CD8-positive, alpha-beta memory T cell (primary cell): ENCODE measurements at regions of chr16 and their contacts with region 1.

Region 1: DNA sequence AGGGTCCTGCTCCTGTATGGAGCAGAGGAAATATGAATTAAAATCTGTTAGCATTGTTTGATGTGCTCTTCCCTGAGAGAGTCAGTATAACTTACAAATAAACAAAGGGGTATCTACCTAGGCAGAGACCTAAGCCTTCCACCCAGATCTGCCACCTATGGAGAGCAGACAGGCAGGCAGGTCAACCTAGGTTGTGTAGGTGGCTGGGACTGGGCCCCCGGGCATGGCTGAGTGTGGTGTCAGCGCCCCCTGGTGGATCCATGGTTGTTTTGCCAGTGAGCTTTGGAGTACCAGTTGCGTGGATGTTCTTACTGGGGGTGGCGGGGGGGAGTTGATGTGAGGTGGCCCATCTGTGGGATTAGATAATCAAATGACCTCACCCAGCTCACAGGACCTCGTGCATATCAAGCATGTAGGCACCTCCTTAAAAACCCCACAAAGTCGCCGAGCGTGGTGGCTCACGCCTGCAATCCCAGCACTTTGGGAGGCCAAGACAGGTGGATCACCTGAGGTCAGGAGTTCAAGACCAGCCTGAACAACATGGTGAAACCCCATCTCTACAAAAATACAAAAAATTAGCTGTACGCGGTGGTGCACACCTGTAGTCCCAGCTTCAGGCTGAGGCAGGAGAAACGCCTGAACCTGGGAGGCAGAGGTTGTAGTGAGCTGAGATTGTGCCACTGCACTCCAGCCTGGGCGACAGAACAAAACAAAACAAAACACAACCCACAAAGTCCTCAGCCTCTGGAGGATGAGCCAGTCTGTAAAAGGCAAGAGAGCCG is 17.6 kb downstream of the DUS2 start:
- DNase-seq: peak; percentile 81 to 91 (median 85)
- H3K4me3 ChIP-seq: no peak overlapping the region
- H3K4me3 Mint-ChIP-seq: no peak overlapping the region
- H3K27ac ChIP-seq: no peak overlapping the region
- H3K27ac Mint-ChIP-seq: peak overlapping the region in 6 of 8 donors; percentile 51 to 92 (median 78)
- H3K4me1 ChIP-seq: peaks cover 8% of the 10 kb centered on the region
- H3K4me1 Mint-ChIP-seq: peaks cover 13 to 22% (median 16%) of the 10 kb centered on the region in 3 donors
- H3K27me3 ChIP-seq: no peaks in the 10 kb centered on the region
- H3K27me3 Mint-ChIP-seq: no peaks in the 10 kb centered on the region

Region 2: GRCh38 chr16:67816240-67817031 is 224.3 kb before region 1 on chr16:
- CTCF ChIA-PET with region 1: interaction called, 18 read pairs
- POLR2A ChIA-PET with region 1: no interaction called
- DNase-seq: peak; percentile 81 to 89 (median 85)
- H3K4me3 ChIP-seq: no peak overlapping the region
- H3K4me3 Mint-ChIP-seq: peak overlapping the region in 2 of 7 donors; percentile 21 to 59
- H3K27ac ChIP-seq: no peak overlapping the region
- H3K27ac Mint-ChIP-seq: peak overlapping the region in 6 of 8 donors; percentile 27 to 61 (median 54)
- H3K4me1 ChIP-seq: no peaks in the 10 kb centered on the region
- H3K4me1 Mint-ChIP-seq: peaks cover 2 to 7% (median 6%) of the 10 kb centered on the region in 3 donors
- H3K27me3 ChIP-seq: no peaks in the 10 kb centered on the region
- H3K27me3 Mint-ChIP-seq: no peaks in the 10 kb centered on the region

Region 3: GRCh38 chr16:67987460-67988160 is 53.1 kb before region 1 on chr16:
- CTCF ChIA-PET with region 1: interaction called, 39 read pairs
- POLR2A ChIA-PET with region 1: interaction called, 5 read pairs
- DNase-seq: no peak
- H3K4me3 ChIP-seq: no peak overlapping the region
- H3K4me3 Mint-ChIP-seq: no peak overlapping the region
- H3K27ac ChIP-seq: no peak overlapping the region
- H3K27ac Mint-ChIP-seq: peak overlapping the region in 7 of 8 donors; percentile 10 to 96 (median 69)
- H3K4me1 ChIP-seq: peaks cover 24% of the 10 kb centered on the region
- H3K4me1 Mint-ChIP-seq: peaks cover 13 to 25% (median 21%) of the 10 kb centered on the region in 3 donors
- H3K27me3 ChIP-seq: no peaks in the 10 kb centered on the region
- H3K27me3 Mint-ChIP-seq: no peaks in the 10 kb centered on the region

Region 4: GRCh38 chr16:67999985-68000384 is 40.7 kb before region 1 on chr16:
- CTCF ChIA-PET with region 1: interaction called, 19 read pairs
- POLR2A ChIA-PET with region 1: interaction called, 4 read pairs
- DNase-seq: peak in 1 of 5 donors; percentile 27
- H3K4me3 ChIP-seq: peak overlapping the region; percentile 70
- H3K4me3 Mint-ChIP-seq: peak overlapping the region; percentile 83 to 92 (median 85)
- H3K27ac ChIP-seq: no peak overlapping the region
- H3K27ac Mint-ChIP-seq: peak overlapping the region; percentile 77 to 96 (median 95)
- H3K4me1 ChIP-seq: peaks cover 46% of the 10 kb centered on the region
- H3K4me1 Mint-ChIP-seq: peaks cover 48 to 71% (median 55%) of the 10 kb centered on the region in 3 donors
- H3K27me3 ChIP-seq: no peaks in the 10 kb centered on the region
- H3K27me3 Mint-ChIP-seq: no peaks in the 10 kb centered on the region

Region 5: DNA sequence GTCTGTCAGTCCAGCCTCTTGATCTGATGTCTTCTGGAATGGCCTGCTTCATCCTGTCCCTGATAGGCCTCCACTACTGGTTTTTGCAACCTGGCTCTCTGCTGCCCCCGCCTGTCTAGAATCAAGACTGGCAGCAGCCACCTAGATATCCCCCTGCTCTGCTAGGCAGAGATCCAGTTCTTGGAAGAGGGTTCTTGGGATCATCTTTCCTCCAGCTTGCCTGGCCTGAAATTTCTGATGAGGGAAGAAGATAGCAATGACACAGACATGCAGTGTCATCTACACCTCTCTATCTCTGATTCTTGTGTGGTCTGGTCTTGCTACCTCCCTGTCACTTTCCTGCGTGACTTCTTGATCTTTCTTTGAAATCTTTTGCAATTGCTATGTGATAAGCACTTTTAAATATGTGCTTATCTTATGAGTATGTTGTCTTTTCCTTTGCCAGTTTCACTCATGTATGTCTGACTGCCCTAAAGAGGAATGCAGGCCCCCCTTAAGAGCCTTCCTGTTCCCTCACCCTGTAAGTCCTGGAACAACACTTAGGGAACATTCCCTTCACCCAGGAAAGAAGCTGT is 24.2 kb after region 1 on chr16:
- CTCF ChIA-PET with region 1: interaction called, 26 read pairs
- POLR2A ChIA-PET with region 1: interaction called, 3 read pairs
- DNase-seq: peak; percentile 56 to 78 (median 62)
- H3K4me3 ChIP-seq: no peak overlapping the region
- H3K4me3 Mint-ChIP-seq: peak overlapping the region; percentile 1 to 88 (median 63)
- H3K27ac ChIP-seq: peak overlapping the region; percentile 12
- H3K27ac Mint-ChIP-seq: peak overlapping the region; percentile 70 to 93 (median 88)
- H3K4me1 ChIP-seq: peaks cover 82% of the 10 kb centered on the region
- H3K4me1 Mint-ChIP-seq: peaks cover 74 to 89% (median 87%) of the 10 kb centered on the region in 3 donors
- H3K27me3 ChIP-seq: no peaks in the 10 kb centered on the region
- H3K27me3 Mint-ChIP-seq: no peaks in the 10 kb centered on the region

Region 6: GRCh38 chr16:68085259-68086071 is 44.8 kb after region 1 on chr16 and contains the start of gene NFATC3:
- CTCF ChIA-PET with region 1: interaction called, 14 read pairs
- POLR2A ChIA-PET with region 1: no interaction called
- DNase-seq: peak; percentile 97 to 99 (median 99)
- H3K4me3 ChIP-seq: peak within 1 kb of the TSS; percentile 96
- H3K4me3 Mint-ChIP-seq: peak within 1 kb of the TSS; percentile 85 to 93 (median 89)
- H3K27ac ChIP-seq: peak within 1 kb of the TSS; percentile 79
- H3K27ac Mint-ChIP-seq: peak within 1 kb of the TSS; percentile 86 to 98 (median 94)
- H3K4me1 ChIP-seq: peaks cover 74% of the 10 kb centered on the region
- H3K4me1 Mint-ChIP-seq: peaks cover 68 to 77% (median 74%) of the 10 kb centered on the region in 3 donors
- H3K27me3 ChIP-seq: no peaks in the 10 kb centered on the region
- H3K27me3 Mint-ChIP-seq: no peaks in the 10 kb centered on the region
- total RNA-seq, gene NFATC3: 91.1 to 95.9 TPM